ENCODE measurements at regions of chr6 and their contacts with region 1.

Region 1: DNA sequence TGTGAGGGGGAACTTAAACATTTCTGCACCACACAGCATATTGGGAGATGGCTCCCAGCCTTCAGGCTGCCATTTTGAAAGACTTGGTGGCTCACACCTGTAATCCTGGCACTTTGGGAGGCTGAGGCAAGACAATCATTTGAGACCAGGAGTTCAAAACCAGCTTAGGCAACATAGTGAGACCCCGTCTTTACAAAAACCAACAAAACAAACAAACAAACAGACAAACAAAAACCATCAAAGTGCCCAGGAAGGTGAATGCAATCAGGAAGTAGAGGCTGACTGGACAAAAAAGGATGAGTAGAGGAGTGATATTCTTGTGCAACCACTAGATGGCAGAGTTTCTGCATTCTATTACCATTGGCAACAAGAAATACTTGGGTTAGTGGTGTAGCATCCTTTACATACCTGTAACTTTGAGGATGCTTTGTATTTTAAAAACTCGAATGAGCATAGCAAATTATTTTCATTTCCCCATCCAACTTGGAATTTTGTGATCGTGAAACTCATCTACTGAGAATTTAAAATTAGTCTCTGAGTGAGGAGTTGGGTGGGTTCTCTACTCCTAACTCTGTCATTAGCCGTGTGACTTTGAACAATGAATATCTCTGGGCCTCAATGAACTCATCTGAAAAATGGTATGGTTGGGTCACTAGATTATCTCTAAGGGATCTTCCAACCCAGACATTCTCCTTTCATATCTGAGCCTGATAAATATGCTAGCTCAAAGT is 84.4 kb downstream of the CRYBG1 start:
- DNase-seq: peak; percentile 45
- ATAC-seq: peak; percentile 87
- H3K4me3 ChIP-seq: no peak overlapping the region
- H3K27ac ChIP-seq: no peak overlapping the region
- H3K4me1 ChIP-seq: no peaks in the 10 kb centered on the region
- H3K27me3 ChIP-seq: no peaks in the 10 kb centered on the region
- CTCF ChIP-seq: peak; percentile 66 to 76 (median 74)
- POLR2A ChIP-seq: no peak
- RAD21 ChIP-seq: peak; percentile 75

Region 2: GRCh38 chr6:106097411-106098231 is 347.3 kb before region 1 on chr6:
- CTCF ChIA-PET with region 1: no interaction called
- POLR2A ChIA-PET with region 1: no interaction called
- RAD21 ChIA-PET with region 1: no interaction called
- intact Hi-C with region 1: loop called (anchors 10 kb)
- DNase-seq: no peak
- ATAC-seq: peak; percentile 53
- H3K4me3 ChIP-seq: peak overlapping the region; percentile 45 to 68
- H3K27ac ChIP-seq: peak overlapping the region; percentile 67
- H3K4me1 ChIP-seq: peaks cover 11 to 31% of the 10 kb centered on the region in 2 experiments; a peak in 3 of 4 replicates
- H3K27me3 ChIP-seq: no peaks in the 10 kb centered on the region
- CTCF ChIP-seq: no peak
- POLR2A ChIP-seq: no peak
- RAD21 ChIP-seq: peak; percentile 5; the same call in 1 of the 2 replicates

Region 3: DNA sequence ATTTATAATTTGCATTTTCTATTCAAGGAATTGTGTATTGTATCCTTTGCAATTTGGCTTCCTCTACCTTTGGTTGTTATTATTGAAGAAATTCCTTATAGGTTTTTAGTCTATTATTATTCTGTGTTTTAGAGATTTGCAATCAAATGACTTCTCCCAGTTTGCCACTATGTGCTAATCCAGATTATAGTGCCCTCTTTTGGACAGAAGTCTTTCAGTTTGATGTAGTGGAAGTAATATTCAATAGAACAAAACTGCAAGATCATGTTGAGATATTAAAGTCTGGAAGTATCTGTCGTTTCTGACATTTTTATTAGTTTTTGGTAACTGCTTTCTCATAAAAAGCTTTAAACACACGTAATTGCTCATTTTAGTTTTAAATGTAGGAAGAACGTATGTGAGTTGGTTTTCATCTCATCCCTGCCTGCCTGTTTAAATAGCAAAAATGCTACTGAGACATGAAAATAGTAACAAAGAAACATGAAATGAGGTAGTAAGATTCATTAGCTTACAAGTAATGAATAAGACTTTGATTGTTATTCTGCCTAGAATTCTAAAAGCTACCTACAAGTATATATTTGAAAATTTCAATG is 111.5 kb after region 1 on chr6:
- CTCF ChIA-PET with region 1: interaction called, 4 read pairs
- POLR2A ChIA-PET with region 1: no interaction called
- RAD21 ChIA-PET with region 1: no interaction called
- intact Hi-C with region 1: loop called (anchors 2 kb)
- DNase-seq: no peak
- ATAC-seq: no peak
- H3K4me3 ChIP-seq: no peak overlapping the region
- H3K27ac ChIP-seq: no peak overlapping the region
- H3K4me1 ChIP-seq: peaks cover 27 to 38% of the 10 kb centered on the region in 2 experiments
- H3K27me3 ChIP-seq: no peaks in the 10 kb centered on the region
- CTCF ChIP-seq: peak; percentile 27 to 70 (median 51)
- POLR2A ChIP-seq: no peak
- RAD21 ChIP-seq: peak; percentile 72

Region 4: DNA sequence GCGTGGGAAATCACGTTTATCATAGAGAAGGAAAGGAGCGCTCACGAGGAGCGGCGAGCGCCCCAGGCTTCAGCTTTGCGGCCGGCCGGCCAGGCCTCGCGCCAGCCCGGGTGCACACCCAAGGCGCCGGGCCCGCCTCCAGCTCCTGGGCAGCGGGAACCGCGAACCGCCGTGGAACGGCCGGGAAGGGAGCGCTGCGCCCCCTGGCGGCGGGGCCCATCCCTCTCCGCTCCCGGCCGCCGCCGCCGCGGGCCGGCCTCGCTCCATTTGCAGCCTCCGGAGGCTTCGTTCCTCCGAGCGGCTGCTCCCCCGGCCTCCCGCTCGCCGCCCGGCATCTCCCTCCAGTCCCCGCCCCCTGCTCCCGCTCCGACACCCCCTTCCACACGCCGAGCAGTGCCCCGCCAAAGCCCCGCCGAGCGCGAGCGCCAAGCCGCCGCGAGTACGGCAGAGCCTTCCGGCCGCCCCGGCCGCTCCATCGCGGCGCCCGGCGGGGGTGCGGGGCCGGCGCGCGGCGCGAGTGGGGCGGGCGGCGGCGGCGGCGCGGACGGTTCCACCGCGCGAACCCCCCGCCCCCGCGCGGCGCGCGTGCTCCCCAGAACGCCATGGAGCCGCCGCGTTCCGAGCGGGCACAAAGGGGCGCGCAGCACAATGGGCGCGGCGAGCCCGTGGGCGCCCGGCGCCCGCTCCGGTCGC is 669.4 kb after region 1 on chr6:
- CTCF ChIA-PET with region 1: no interaction called
- POLR2A ChIA-PET with region 1: no interaction called
- RAD21 ChIA-PET with region 1: no interaction called
- intact Hi-C with region 1: loop called (anchors 5 kb)
- DNase-seq: peak; percentile 52
- ATAC-seq: peak; percentile 76
- H3K4me3 ChIP-seq: peak overlapping the region; percentile 53 to 66
- H3K27ac ChIP-seq: peak overlapping the region; percentile 77
- H3K4me1 ChIP-seq: peaks cover 18 to 31% of the 10 kb centered on the region in 2 experiments; a peak in 3 of 4 replicates
- H3K27me3 ChIP-seq: no peaks in the 10 kb centered on the region
- CTCF ChIP-seq: peak; percentile 21 to 66 (median 61); a peak in 4 of 6 replicates
- POLR2A ChIP-seq: no peak
- RAD21 ChIP-seq: peak; percentile 47